GM18951 (cell line): ENCODE measurements at regions of chr5 and their contacts with region 1.

Region 1: DNA sequence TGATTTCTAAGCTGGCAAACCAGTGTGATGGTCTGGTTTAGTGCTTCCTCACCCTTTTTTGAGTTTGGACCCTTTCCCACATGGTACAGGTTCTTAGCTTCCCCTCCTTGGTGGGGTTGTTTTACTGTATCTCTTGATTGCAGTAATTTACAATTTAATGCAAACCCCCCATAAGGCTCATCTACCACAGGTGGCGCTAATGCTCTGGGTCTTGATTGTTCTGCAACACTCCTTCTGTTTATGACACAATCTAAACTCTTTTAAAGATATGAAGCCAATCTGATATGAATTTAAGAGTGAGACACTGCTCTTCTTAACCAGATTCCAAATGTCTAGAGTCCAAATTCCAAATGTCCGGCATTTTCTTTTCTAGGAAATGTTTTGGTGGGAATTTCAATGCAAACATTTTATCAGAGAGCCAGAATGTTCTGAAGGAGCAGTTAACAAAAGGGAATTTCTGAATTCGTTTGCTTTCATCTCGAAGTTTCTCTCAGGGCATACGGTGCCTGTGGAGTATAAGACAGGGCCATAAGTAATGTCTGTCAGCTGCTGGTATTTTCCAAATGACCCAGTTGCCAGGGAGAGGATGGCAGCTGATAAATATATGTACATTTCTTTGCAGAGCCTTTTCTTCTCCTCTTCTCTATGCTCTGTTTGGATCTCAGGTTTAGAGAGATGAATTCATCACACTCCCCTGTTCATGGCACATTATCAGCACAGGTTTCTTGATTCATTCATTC is 246.8 kb downstream of the ARHGAP26 start:
- POLR2A ChIP-seq: no peak

Region 2: DNA sequence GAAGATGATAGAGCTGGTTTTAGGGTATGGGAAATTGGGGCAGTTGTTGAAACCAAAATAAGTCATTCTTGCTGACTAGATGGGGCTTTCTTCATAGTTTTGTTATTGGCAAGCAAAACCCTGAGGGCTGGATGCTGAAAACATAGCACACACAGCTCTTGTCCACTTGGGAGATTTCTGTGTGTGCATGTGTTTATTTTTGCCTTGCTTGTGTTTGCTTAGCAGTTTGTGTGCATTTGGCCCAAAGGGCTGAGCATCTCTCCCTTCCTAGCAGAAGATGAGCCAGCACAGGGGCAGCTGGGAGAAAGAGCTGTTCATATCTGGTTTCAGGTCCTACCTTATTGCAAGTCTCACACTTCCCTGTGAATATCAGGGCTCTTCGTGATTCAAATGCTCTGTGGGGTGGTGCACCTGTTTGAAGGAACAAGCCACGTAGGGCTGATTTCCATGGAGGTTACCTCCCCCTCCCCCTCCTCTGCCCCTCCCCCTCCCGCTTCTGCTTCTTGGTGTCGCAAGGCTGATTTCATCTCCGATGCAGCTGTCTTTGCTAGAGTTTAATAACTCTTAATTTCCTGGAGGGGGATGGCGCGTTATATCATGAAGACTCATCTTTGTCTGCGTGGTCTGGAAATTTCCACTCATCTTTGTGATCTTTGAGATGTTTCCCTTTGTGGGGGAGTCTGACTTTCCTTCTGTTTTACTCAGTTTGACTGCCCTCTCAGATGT is 49.8 kb after region 1 on chr5:
- in situ Hi-C with region 1: no loop called
- POLR2A ChIP-seq: no peak

Region 3: DNA sequence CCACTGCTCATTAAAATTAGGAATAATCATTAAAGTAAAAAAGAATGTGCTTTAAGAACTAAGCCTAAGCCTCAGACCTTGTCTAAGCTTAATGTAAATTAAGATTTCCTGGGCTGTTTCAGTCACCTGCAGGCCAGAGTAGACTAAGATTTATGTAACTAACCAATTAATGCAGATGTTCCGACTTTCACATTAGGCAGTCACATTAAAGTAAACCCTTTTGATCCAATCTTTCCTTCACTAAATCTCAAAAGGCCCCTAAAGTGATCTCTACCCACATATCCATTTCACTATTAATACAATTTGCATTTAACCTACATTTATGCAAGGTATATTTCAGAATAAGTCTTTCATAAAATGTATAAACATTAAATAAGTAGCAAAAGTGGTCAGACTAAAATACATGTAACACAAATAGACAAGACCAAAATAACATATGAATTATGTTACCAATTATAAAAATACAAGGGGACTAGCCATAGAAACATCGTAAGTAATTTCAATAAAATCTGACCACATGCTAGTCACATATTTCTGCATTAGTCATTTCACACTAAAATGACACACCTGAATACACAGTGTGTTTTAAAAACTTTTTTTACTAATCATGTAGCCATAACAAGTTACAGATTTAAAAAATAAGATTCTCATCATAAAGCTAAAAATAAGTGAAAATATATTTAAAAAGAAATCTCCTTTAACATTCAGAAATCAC is 378.8 kb after region 1 on chr5:
- in situ Hi-C with region 1: loop called (anchors 10 kb)
- POLR2A ChIP-seq: no peak

Region 4: GRCh38 chr5:143824851-143825720 is 808.1 kb after region 1 on chr5:
- in situ Hi-C with region 1: loop called (anchors 5 kb)
- POLR2A ChIP-seq: no peak